Caki2 (cell line): ENCODE measurements at regions of chr17 and their contacts with region 1.

Region 1: DNA sequence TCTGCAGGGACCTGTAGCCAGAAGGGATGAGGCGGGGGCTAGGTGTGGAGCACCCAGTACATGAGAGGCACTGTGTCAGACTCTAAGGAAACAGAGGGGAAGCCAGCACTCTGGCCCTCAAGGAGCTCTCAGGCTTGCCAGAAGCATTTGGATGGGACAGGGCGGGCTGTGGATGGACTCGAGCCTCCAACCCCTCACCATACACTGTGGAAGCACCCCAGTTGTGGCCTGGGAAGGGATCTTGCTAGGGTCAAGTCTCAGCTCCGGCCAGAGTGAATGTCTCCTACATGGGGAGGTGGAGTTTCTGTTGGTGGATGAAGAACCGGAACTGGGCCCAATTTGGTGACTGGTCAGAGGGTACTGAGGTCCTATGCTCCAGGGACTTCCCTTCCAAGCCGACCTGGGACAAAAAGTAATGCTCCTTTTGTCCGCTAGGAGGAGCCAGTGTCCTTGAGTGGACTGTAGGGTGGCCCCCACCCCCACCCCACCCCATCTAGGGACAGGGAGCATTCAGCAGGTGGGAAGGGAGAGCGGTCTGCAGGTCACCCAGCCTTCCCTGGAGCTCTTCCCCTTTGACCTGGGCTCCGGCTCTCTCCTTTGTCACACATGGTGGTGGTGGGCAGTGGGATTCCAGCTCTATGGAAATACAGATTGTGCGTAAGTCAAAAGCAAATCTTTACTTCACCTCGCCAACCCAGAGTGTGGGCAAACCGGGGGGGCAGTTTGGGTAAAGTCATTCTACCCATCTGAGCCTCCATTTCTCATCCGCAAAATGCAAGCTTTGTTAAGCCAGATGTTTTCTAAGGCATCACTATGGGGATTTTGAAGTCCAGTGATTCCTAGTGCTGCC is 20.4 kb upstream of the PHB1 start:
- DNase-seq: peak; percentile 43

Region 2: DNA sequence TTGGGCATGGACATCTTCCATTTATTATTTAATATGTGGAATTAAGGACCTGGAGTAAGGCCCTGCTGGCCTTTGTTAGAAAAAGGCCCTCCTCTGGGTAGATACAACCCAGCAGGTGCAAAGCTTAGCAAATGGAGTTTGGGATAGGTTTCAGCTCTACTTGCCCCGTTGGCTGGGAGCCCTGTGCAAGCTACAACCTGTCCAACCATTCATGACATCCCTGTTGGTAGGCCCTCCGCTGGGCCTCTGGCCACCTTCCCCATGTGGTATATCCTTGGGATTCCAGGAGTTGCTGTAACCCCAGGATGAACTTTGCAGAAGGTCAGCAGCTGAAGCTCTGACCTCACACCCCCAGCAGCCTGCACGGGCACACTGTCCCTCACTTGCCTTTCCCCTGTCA is 66.5 kb after region 1 on chr17:
- in situ Hi-C with region 1: loop called (anchors 5 kb)
- DNase-seq: no peak

Region 3: GRCh38 chr17:49677933-49678847 is 243.1 kb after region 1 on chr17 and contains the start of gene SPOP:
- in situ Hi-C with region 1: no loop called
- DNase-seq: peak; percentile 99
- total RNA-seq, gene SPOP: 36.7 and 68.6 TPM in 2 replicates